CD14-positive monocyte (primary cell): ENCODE measurements at regions of chr11 and their contacts with region 1.

Region 1: GRCh38 chr11:62805076-62805892 is at the start of gene NXF1:
- DNase-seq: peak; percentile 96 to 97 (median 96)
- H3K4me3 ChIP-seq: peak within 1 kb of the TSS; percentile 75 to 97 (median 91)
- H3K4me3 Mint-ChIP-seq: peak within 1 kb of the TSS; percentile 97 to 98
- H3K27ac ChIP-seq: peak within 1 kb of the TSS; percentile 98
- H3K27ac Mint-ChIP-seq: peak within 1 kb of the TSS; percentile 95 to 99 (median 98)
- H3K4me1 ChIP-seq: peaks cover 44 to 48% of the 10 kb centered on the region in 2 donors
- H3K4me1 Mint-ChIP-seq: peaks cover 35% of the 10 kb centered on the region
- H3K27me3 ChIP-seq: no peaks in the 10 kb centered on the region
- H3K27me3 Mint-ChIP-seq: peaks cover 0 to 3% (median 2%) of the 10 kb centered on the region in 3 donors
- CTCF ChIP-seq: no peak
- polyA plus RNA-seq, gene NXF1: 50.1 to 748 (median 70.6) TPM

Region 2: GRCh38 chr11:62771144-62772021 is 33.9 kb before region 1 on chr11 and contains the start of gene TAF6L:
- intact Hi-C with region 1: loop called in 1 of 2 experiments (anchors 1 kb)
- DNase-seq: peak; percentile 94 to 98 (median 96)
- H3K4me3 ChIP-seq: peak within 1 kb of the TSS; percentile 64 to 87 (median 65)
- H3K4me3 Mint-ChIP-seq: peak within 1 kb of the TSS; percentile 84 to 94
- H3K27ac ChIP-seq: peak within 1 kb of the TSS; percentile 63 to 86
- H3K27ac Mint-ChIP-seq: peak within 1 kb of the TSS; percentile 89 to 98 (median 95)
- H3K4me1 ChIP-seq: peaks cover 27 to 37% of the 10 kb centered on the region in 2 donors
- H3K4me1 Mint-ChIP-seq: peaks cover 34% of the 10 kb centered on the region
- H3K27me3 ChIP-seq: no peaks in the 10 kb centered on the region
- H3K27me3 Mint-ChIP-seq: peaks cover 0 to 2% (median 0%) of the 10 kb centered on the region in 3 donors
- CTCF ChIP-seq: no peak
- polyA plus RNA-seq, gene TAF6L: 5.1 to 35.5 (median 5.3) TPM

Region 3: DNA sequence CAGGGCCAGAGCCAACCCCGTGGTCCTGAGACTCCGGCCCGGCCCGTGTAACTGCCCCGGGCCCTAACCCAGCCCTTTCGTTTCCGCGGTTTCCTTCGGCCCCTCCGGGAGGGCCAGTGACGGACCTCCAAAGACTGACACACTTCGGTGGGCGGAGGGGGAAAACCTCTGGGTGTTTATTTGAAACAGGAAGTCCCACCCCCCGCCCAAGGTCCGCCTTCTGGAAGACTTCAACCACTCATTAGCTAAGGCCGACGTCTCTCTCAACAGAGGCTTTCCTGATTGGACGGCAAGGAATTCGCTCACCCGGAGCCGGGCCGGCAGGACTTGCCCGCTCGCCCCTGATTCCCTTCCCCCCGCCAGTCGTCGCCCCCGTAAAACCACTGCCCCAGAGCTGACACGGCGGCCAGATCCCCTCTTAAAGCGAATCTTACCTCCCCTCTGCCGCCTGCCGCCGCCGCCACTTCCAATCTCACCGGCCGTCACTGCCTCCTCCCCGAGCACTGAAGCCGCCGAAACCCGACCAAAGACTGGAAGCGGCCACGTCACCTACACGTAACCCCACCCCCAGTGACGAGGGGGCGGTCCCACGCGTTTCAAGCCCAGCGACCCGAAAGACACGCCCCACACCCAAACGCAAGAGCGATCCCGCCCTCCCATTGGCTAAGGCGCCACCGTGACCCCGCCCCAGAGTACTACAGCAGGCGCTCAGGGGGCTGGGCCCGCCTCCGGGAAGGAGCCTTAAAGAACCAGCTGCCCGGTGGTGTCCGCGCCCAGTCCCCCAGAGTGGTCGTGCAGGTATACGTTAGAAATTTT is 26.4 kb after region 1 on chr11 and contains the start of gene STX5:
- intact Hi-C with region 1: loop called (anchors 2 to 5 kb)
- DNase-seq: peak; percentile 97 to 99 (median 98)
- H3K4me3 ChIP-seq: peak within 1 kb of the TSS; percentile 69 to 96 (median 88)
- H3K4me3 Mint-ChIP-seq: peak within 1 kb of the TSS; percentile 97 to 98
- H3K27ac ChIP-seq: peak within 1 kb of the TSS; percentile 84 to 86
- H3K27ac Mint-ChIP-seq: peak within 1 kb of the TSS; percentile 99 to 100 (median 99)
- H3K4me1 ChIP-seq: peaks cover 24 to 31% of the 10 kb centered on the region in 2 donors
- H3K4me1 Mint-ChIP-seq: peaks cover 32% of the 10 kb centered on the region
- H3K27me3 ChIP-seq: no peaks in the 10 kb centered on the region
- H3K27me3 Mint-ChIP-seq: no peaks in the 10 kb centered on the region
- CTCF ChIP-seq: no peak
- polyA plus RNA-seq, gene STX5: 36.4 to 39.6 (median 38.5) TPM

Region 4: DNA sequence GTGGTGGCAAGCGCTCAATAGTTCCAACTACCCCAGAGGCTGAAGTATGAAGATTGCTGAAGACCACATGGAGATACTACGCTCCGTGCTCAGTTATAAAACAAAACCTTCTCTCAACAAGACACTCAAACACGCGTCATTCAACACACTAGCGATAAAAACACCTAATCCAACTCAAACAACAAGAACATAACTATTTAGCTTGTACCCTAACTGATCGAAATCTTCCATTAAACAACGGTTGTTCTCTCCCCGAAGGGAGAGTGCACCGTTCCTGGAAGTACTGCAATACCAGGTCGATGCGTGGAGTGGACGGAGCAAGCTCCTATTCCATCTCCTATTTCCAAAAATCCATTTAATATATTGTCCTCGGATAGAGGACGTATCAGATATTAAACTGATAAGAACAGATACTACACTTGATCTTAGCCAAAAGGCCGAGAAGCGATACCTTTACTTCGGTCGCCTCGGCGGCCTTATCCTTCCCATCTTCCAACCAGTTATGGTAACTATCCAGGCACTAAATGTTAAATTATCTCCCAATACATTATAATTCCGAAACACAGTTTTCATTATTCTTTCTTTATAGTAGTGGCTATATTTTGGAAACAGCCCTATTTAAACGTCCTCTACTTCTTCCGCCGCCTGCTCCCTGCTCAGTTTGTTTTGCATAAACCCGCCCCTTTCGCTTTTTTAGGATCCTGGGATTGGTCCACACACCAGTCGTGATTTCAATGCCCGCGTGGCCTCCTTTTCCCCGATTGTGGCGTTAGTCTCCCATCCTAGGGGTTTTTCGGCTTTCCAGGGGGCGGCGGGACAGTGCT is 36.3 kb after region 1 on chr11:
- intact Hi-C with region 1: loop called in 1 of 2 experiments (anchors 5 kb)
- DNase-seq: peak; percentile 92 to 97 (median 94)
- H3K4me3 ChIP-seq: peak overlapping the region; percentile 62 to 98 (median 93)
- H3K4me3 Mint-ChIP-seq: no peak overlapping the region
- H3K27ac ChIP-seq: peak overlapping the region; percentile 97 to 99
- H3K27ac Mint-ChIP-seq: no peak overlapping the region
- H3K4me1 ChIP-seq: peaks cover 29 to 36% of the 10 kb centered on the region in 2 donors
- H3K4me1 Mint-ChIP-seq: peaks cover 20% of the 10 kb centered on the region
- H3K27me3 ChIP-seq: no peaks in the 10 kb centered on the region
- H3K27me3 Mint-ChIP-seq: no peaks in the 10 kb centered on the region
- CTCF ChIP-seq: no peak

Region 5: GRCh38 chr11:62922658-62923431 is 117.6 kb after region 1 on chr11:
- intact Hi-C with region 1: no loop called
- DNase-seq: no peak
- H3K4me3 ChIP-seq: no peak overlapping the region
- H3K4me3 Mint-ChIP-seq: peak overlapping the region in 1 of 2 donors; percentile 90
- H3K27ac ChIP-seq: no peak overlapping the region
- H3K27ac Mint-ChIP-seq: peak overlapping the region in 1 of 7 donors; percentile 35
- H3K4me1 ChIP-seq: peaks cover 6 to 17% of the 10 kb centered on the region in 2 donors
- H3K4me1 Mint-ChIP-seq: peaks cover 20% of the 10 kb centered on the region
- H3K27me3 ChIP-seq: peaks cover 35 to 61% of the 10 kb centered on the region in 2 donors
- H3K27me3 Mint-ChIP-seq: peaks cover 71 to 81% (median 77%) of the 10 kb centered on the region in 3 donors
- CTCF ChIP-seq: no peak